HEK293T (cell line): ENCODE measurements at regions of chr17 and their contacts with region 1.

Region 1: GRCh38 chr17:40151414-40151963 is 11.2 kb downstream of the CASC3 start:
- DNase-seq: no peak

Region 2: GRCh38 chr17:40139566-40140058 is 11.9 kb before region 1 on chr17:
- CTCF ChIA-PET with region 1: no interaction called
- POLR2A ChIA-PET with region 1: interaction called, 10 read pairs
- DNase-seq: no peak